GM18951 (cell line): ENCODE measurements at regions of chr3 and their contacts with region 1.

Region 1: GRCh38 chr3:187679638-187680396 is 9.6 kb upstream of the SST start:
- POLR2A ChIP-seq: no peak

Region 2: GRCh38 chr3:187319699-187320302 is 360.0 kb before region 1 on chr3:
- in situ Hi-C with region 1: loop called (anchors 5 kb)
- POLR2A ChIP-seq: no peak

Region 3: GRCh38 chr3:187610981-187611511 is 68.8 kb before region 1 on chr3:
- in situ Hi-C with region 1: loop called (anchors 5 kb)
- POLR2A ChIP-seq: no peak